IMR-90 (cell line): ENCODE measurements at regions of chr3 and their contacts with region 1.

Region 1: GRCh38 chr3:48439820-48440589 is at the starts of genes CCDC51 and TMA7:
- DNase-seq: peak; percentile 93
- ATAC-seq: peak; percentile 97
- H3K4me3 ChIP-seq: peak within 1 kb of the TSS; percentile 90
- H3K27ac ChIP-seq: peak within 1 kb of the TSS; percentile 89
- H3K4me1 ChIP-seq: 0 out of 2 replicates have a peak, but pooled peaks cover 2% of the 10 kb centered on the region
- H3K27me3 ChIP-seq: no peaks in the 10 kb centered on the region
- CTCF ChIP-seq: no peak
- POLR2A ChIP-seq: peak; percentile 88
- RAD21 ChIP-seq: no peak
- total RNA-seq, gene CCDC51: 15.3 and 16.1 TPM in 2 replicates
- total RNA-seq, gene TMA7: 81.9 and 131 TPM in 2 replicates

Region 2: GRCh38 chr3:48194446-48195071 is 245.4 kb before region 1 on chr3:
- CTCF ChIA-PET with region 1: interaction called, 23 read pairs
- POLR2A ChIA-PET with region 1: interaction called, 14 read pairs
- dilution Hi-C with region 1: no loop called
- in situ Hi-C with region 1: no loop called
- intact Hi-C with region 1: loop called (anchors 1 kb)
- DNase-seq: peak; percentile 51
- ATAC-seq: peak; percentile 94
- H3K4me3 ChIP-seq: no peak overlapping the region
- H3K27ac ChIP-seq: no peak overlapping the region
- H3K4me1 ChIP-seq: no peaks in the 10 kb centered on the region
- H3K27me3 ChIP-seq: peaks cover 7% of the 10 kb centered on the region
- CTCF ChIP-seq: peak; percentile 82
- POLR2A ChIP-seq: no peak
- RAD21 ChIP-seq: peak; percentile 79

Region 3: DNA sequence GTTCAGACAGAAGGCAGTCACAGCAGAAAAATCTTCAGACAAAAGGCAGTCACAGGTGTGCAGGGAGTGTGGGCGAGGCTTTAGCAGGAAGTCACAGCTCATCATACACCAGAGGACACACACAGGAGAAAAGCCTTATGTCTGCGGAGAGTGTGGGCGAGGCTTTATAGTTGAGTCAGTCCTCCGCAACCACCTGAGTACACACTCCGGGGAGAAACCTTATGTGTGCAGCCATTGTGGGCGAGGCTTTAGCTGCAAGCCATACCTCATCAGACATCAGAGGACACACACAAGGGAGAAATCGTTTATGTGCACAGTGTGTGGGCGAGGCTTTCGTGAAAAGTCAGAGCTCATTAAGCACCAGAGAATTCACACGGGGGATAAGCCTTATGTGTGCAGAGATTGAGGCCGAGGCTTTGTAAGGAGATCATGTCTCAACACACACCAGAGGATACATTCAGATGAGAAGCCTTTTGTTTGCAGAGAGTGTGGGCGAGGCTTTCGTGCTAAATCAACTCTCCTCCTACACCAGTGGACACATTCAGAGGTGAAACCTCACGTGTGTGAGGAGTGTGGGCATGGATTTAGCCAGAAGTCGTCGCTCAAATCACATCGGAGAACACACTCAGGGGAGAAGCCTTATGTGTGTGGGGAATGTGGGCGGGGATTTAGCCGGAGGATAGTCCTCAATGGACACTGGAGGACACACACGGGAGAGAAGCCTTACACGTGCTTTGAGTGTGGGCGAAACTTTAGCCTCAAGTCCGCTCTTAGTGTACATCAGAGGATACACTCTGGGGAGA is 171.4 kb before region 1 on chr3:
- CTCF ChIA-PET with region 1: interaction called, 25 read pairs
- POLR2A ChIA-PET with region 1: no interaction called
- dilution Hi-C with region 1: no loop called
- in situ Hi-C with region 1: loop called (anchors 5 kb)
- intact Hi-C with region 1: loop called (anchors 1 kb)
- DNase-seq: no peak
- ATAC-seq: no peak
- H3K4me3 ChIP-seq: no peak overlapping the region
- H3K27ac ChIP-seq: no peak overlapping the region
- H3K4me1 ChIP-seq: no peaks in the 10 kb centered on the region
- H3K27me3 ChIP-seq: no peaks in the 10 kb centered on the region
- CTCF ChIP-seq: no peak
- POLR2A ChIP-seq: no peak
- RAD21 ChIP-seq: no peak

Region 4: GRCh38 chr3:48395714-48396113 is 44.3 kb before region 1 on chr3:
- CTCF ChIA-PET with region 1: interaction called, 65 read pairs
- POLR2A ChIA-PET with region 1: interaction called, 4 read pairs
- dilution Hi-C with region 1: no loop called
- in situ Hi-C with region 1: loop called (anchors 5 kb)
- intact Hi-C with region 1: no loop called
- DNase-seq: no peak
- ATAC-seq: no peak
- H3K4me3 ChIP-seq: no peak overlapping the region
- H3K27ac ChIP-seq: no peak overlapping the region
- H3K4me1 ChIP-seq: no peaks in the 10 kb centered on the region
- H3K27me3 ChIP-seq: peaks cover 14% of the 10 kb centered on the region
- CTCF ChIP-seq: no peak
- POLR2A ChIP-seq: no peak
- RAD21 ChIP-seq: no peak

Region 5: GRCh38 chr3:48492543-48493501 is 52.8 kb after region 1 on chr3:
- CTCF ChIA-PET with region 1: no interaction called
- POLR2A ChIA-PET with region 1: no interaction called
- dilution Hi-C with region 1: no loop called
- in situ Hi-C with region 1: no loop called
- intact Hi-C with region 1: no loop called
- DNase-seq: no peak
- ATAC-seq: no peak
- H3K4me3 ChIP-seq: no peak overlapping the region
- H3K27ac ChIP-seq: no peak overlapping the region
- H3K4me1 ChIP-seq: no peaks in the 10 kb centered on the region
- H3K27me3 ChIP-seq: no peaks in the 10 kb centered on the region
- CTCF ChIP-seq: no peak
- POLR2A ChIP-seq: no peak
- RAD21 ChIP-seq: no peak

Region 6: GRCh38 chr3:48635222-48636021 is 195.4 kb after region 1 on chr3 and contains the start of gene SLC26A6:
- CTCF ChIA-PET with region 1: interaction called, 3 read pairs
- POLR2A ChIA-PET with region 1: no interaction called
- dilution Hi-C with region 1: no loop called
- in situ Hi-C with region 1: no loop called
- intact Hi-C with region 1: loop called (anchors 10 kb)
- DNase-seq: peak; percentile 93
- ATAC-seq: peak; percentile 98
- H3K4me3 ChIP-seq: peak within 1 kb of the TSS; percentile 83
- H3K27ac ChIP-seq: peak within 1 kb of the TSS; percentile 79
- H3K4me1 ChIP-seq: peaks cover 18% of the 10 kb centered on the region
- H3K27me3 ChIP-seq: no peaks in the 10 kb centered on the region
- CTCF ChIP-seq: peak; percentile 64
- POLR2A ChIP-seq: no peak; the same call in 1 of the 2 replicates
- RAD21 ChIP-seq: peak; percentile 46
- total RNA-seq, gene SLC26A6: 11.7 and 11.8 TPM in 2 replicates